ENCODE measurements at regions of chr2 and their contacts with region 1.

Region 1: DNA sequence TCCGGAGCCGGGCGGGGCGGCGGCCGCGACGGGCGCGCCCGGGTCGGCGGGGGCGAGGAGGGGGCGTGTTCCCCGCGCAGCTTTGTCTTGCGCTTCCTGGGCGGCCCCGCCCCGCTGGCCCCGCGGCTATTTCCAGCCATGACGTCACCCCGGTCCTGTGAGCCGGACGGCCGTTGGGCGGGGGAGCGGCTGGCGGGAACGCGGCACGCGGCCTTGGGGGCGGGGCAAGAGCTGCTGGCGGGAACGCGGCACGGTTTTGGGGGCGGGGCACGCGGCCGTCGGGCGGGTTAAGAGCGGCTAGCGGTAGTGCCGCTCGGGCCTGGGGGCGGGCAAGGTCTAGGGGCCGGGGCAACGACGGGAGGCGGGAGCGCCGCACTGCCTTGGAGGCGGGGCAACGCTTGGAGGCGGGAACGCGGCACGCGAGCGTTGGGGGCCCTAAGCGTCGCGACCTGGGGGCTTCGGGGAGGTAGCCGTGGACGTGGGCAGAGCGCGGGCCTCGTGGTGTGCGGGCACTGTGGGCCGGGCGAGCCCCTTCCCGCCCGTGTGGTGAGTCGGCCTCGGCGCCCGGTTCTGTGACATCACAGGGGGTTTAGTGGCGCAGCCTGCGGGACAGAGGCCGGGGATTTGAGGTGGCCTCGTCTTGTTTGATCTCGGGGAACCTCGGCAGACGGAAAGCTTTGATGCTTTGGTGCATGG is 704 bp downstream of the KLF11 start:
- DNase-seq: peak; percentile 87
- H3K4me3 Mint-ChIP-seq: peak overlapping the region; percentile 59
- H3K27ac Mint-ChIP-seq: peak overlapping the region; percentile 33
- H3K4me1 Mint-ChIP-seq: peaks cover 15% of the 10 kb centered on the region
- H3K27me3 Mint-ChIP-seq: peaks cover 3% of the 10 kb centered on the region

Region 2: DNA sequence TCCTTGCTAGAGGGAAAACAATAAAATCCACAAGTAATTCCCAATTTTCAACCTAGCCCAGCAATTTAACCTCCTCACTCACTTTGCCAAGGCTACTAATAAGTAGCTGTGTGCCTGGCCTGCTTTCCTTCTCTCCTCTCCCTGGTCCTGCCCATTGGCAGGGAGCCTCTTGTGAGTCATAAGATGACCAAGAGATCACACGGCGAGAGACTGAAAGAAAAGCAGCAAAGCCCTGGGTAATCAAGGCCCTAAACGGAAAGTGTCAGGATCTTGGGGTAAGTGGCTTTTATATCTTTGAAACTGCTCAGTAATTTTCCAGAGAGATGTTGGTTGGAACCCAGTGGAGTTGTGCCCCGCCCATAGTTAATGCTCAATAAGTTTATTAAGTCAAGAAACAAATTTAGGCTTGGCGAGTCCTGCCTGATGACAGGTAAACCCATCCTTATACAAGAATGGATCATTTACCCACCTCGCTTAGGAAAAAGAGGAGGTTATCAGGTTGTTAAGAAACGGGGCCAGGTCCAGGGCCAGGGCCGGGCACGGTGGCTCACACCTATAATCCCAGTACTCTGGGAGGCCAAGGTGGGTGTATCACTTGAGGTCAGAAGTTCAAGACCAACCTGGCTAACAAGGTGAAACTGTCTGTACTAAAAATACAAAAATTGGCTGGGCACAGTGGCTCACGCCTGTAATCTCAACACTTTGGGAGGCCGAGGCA is 478.5 kb before region 1 on chr2:
- CTCF ChIA-PET with region 1: no interaction called
- intact Hi-C with region 1: no loop called
- DNase-seq: no peak
- H3K4me3 Mint-ChIP-seq: no peak overlapping the region
- H3K27ac Mint-ChIP-seq: no peak overlapping the region
- H3K4me1 Mint-ChIP-seq: no peaks in the 10 kb centered on the region
- H3K27me3 Mint-ChIP-seq: no peaks in the 10 kb centered on the region

Region 3: GRCh38 chr2:9799665-9800632 is 244.1 kb before region 1 on chr2:
- CTCF ChIA-PET with region 1: interaction called, 32 read pairs
- intact Hi-C with region 1: loop called (anchors 1 kb)
- DNase-seq: peak; percentile 93
- H3K4me3 Mint-ChIP-seq: no peak overlapping the region
- H3K27ac Mint-ChIP-seq: no peak overlapping the region
- H3K4me1 Mint-ChIP-seq: peaks cover 11% of the 10 kb centered on the region
- H3K27me3 Mint-ChIP-seq: no peaks in the 10 kb centered on the region

Region 4: GRCh38 chr2:9813312-9814133 is 230.5 kb before region 1 on chr2:
- CTCF ChIA-PET with region 1: interaction called, 92 read pairs
- intact Hi-C with region 1: loop called (anchors 1 kb)
- DNase-seq: peak; percentile 75
- H3K4me3 Mint-ChIP-seq: no peak overlapping the region
- H3K27ac Mint-ChIP-seq: no peak overlapping the region
- H3K4me1 Mint-ChIP-seq: peaks cover 12% of the 10 kb centered on the region
- H3K27me3 Mint-ChIP-seq: no peaks in the 10 kb centered on the region

Region 5: DNA sequence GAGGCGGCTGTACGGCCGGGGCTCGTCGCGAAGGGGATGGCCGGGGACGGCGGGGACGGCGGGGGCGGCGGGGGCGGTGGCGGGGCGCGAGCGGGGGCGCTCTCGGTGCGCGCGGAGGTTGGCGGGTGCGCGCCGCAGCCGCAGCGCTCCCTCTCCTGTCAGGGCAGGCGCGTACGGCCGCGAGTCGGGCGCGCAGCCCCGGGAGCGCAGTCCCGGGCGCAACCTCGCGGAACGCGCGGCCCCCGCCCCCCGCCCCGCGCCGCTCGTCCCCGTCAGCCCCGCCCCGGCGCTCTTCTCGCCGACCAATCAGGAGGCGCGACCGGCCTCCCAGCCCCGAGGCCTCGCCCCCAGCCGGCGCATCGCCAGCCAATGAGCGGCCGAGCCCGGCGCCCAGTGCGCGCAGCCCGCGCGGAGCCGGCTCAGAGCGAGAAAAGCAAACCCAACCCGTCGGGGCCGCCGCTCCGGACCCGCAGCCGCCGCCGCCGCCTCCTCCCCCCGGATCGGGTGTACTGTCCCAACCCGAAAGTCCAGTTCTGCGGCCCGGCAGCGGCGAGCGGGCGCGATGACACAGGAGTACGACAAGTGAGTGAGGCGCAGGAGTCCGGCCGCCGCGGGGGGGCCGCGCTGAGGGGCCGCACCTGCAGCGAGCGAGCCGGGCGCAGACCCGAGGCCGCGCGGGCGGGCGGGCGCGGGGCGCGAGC is 92.6 kb before region 1 on chr2 and contains the start of gene GRHL1:
- CTCF ChIA-PET with region 1: no interaction called
- intact Hi-C with region 1: loop called (anchors 1 kb)
- DNase-seq: peak; percentile 88
- H3K4me3 Mint-ChIP-seq: peak within 1 kb of the TSS; percentile 75
- H3K27ac Mint-ChIP-seq: no peak within 1 kb of the TSS
- H3K4me1 Mint-ChIP-seq: peaks cover 2% of the 10 kb centered on the region
- H3K27me3 Mint-ChIP-seq: peaks cover 32% of the 10 kb centered on the region
- total RNA-seq, gene GRHL1: 0.69 to 0.79 TPM

Region 6: GRCh38 chr2:9984217-9984739 is 59.8 kb before region 1 on chr2:
- CTCF ChIA-PET with region 1: interaction called, 131 read pairs
- intact Hi-C with region 1: loop called (anchors 1 kb)
- DNase-seq: peak; percentile 48
- H3K4me3 Mint-ChIP-seq: no peak overlapping the region
- H3K27ac Mint-ChIP-seq: no peak overlapping the region
- H3K4me1 Mint-ChIP-seq: peaks cover 15% of the 10 kb centered on the region
- H3K27me3 Mint-ChIP-seq: no peaks in the 10 kb centered on the region

Region 7: DNA sequence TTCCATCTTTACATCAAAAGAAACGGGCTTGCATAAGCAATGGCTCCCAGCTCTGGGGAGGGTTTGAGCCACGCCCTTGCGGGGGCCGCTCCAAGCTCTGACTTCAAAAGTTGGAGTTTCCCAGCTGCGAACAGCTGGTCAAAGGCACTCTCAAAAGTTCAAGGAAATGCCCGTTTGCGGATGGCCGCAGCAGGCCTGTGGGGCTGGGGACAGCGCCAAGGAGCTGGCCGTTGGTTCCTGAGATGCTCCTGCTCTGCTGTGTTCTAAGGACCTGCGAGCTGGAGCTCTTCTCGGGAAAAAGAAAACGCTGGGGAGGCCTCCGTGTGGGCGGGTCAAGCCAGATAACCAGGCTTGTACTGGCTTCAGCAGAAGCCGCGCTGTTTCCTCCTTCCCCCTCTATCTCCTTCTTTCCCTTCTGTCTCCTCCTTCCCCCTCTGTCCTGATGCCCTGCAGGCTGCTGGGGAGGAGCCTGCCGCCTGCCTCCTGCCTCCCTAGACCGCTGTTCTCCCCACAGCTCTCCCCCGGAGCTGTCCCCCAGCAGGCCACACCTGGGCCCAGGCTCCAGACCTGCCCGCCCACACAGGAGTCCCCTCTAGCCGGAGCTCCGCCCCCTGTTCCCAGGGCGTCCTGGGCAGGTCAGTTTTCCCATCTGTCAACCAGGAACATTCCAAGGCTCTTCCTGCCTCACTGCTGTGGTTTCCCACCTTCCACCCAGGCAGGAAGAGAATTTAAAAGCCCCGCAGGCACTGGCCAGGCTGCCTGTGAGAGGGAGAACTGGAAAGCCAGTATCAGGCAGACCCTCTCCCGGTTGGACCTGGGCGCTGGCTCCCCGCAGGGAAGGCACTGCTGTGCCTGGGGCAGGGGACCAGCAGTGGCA is 13.4 kb after region 1 on chr2:
- CTCF ChIA-PET with region 1: interaction called, 12 read pairs
- intact Hi-C with region 1: no loop called
- DNase-seq: peak; percentile 52
- H3K4me3 Mint-ChIP-seq: no peak overlapping the region
- H3K27ac Mint-ChIP-seq: no peak overlapping the region
- H3K4me1 Mint-ChIP-seq: peaks cover 3% of the 10 kb centered on the region
- H3K27me3 Mint-ChIP-seq: peaks cover 3% of the 10 kb centered on the region